OCI-LY7 (cell line): ENCODE measurements at regions of chr20 and their contacts with region 1.

Region 1: DNA sequence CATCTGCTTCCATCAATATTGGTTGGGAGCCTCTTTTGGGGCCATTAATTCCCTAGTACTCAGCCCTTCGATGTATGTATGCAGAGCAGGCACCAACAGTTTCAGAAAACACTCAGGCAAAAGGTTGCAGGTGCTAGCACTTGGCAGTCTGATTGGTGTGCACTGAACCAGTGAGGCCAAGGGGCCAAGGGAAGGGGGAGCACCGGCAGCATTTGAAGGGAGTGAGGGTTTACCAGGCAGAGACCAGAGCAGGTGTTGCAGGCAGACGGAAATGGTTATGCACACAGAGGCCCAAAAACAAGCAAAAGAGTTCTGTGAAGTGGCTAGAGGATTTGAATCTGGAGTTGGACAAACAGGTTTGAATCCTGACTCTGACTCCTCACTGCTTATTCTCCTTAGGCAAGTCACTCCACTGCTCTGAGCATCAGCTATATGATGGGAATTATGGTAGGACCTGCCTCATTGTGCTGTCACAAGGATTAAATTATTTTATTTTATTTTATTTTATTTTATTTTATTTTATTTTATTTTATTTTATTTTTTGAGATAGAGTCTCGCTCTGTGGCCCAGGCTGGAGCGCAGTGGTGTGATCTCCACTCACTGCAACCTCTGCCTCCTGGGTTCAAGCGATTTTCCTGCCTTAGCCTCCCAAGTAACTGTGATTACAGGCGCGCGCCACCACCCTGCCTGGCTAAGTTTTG is 58.1 kb upstream of the SHLD1 start:
- DNase-seq: peak; percentile 99
- H3K4me3 ChIP-seq: peak overlapping the region; percentile 48
- H3K27ac ChIP-seq: peak overlapping the region; percentile 93
- H3K4me1 ChIP-seq: peaks cover 75% of the 10 kb centered on the region
- CTCF ChIP-seq: no peak

Region 2: DNA sequence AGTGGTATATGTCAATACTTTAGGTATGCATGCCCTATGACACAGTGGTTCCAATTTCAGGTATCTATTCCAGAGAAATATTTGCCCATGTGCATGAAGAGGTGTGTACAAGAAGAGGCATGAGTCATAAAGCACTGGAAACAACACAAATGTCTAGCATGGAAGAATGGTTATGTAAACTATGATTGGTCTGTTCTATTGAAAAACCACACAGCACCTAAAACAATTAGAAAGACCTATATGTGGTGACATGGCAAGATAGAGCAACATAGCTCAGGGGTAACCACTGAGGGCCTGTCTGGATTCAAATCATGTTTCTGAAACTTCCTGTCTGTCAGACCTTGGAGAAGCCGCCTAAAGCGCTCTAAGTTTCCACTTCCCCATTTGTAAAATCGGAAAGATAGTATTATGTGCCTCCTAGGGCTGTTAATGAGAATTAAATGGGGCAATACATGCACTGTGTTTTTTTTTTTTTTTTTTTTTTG is 17.9 kb before region 1 on chr20:
- CTCF ChIA-PET with region 1: no interaction called
- POLR2A ChIA-PET with region 1: interaction called, 36 read pairs
- intact Hi-C with region 1: loop called (anchors 1 kb)
- DNase-seq: peak; percentile 94
- H3K4me3 ChIP-seq: peak overlapping the region; percentile 61
- H3K27ac ChIP-seq: peak overlapping the region; percentile 94
- H3K4me1 ChIP-seq: peaks cover 99% of the 10 kb centered on the region
- CTCF ChIP-seq: 0 out of 2 replicates have a peak, but pooled peaks have one; percentile 30

Region 3: DNA sequence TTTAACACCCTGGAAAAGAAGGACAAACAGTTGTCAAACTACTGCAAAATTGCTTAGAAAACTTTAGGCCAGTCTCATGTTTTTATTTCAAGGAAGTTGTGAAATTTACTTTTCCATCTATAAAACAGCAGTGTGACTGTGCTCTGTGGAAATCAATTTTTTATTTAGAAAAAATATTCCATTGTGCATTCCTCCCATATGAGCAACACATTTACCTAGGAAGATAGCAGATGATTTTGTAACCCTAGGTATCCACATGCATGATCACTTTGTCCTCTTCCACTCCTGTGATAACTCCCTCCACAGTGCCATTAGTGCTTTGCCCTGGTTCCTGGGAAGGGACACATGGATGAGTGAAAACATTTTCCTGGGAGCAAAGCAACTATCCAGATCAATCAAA is 11.9 kb before region 1 on chr20:
- CTCF ChIA-PET with region 1: no interaction called
- POLR2A ChIA-PET with region 1: interaction called, 36 read pairs
- intact Hi-C with region 1: no loop called
- DNase-seq: no peak
- H3K4me3 ChIP-seq: no peak overlapping the region
- H3K27ac ChIP-seq: no peak overlapping the region
- H3K4me1 ChIP-seq: peaks cover 63% of the 10 kb centered on the region
- CTCF ChIP-seq: no peak

Region 4: DNA sequence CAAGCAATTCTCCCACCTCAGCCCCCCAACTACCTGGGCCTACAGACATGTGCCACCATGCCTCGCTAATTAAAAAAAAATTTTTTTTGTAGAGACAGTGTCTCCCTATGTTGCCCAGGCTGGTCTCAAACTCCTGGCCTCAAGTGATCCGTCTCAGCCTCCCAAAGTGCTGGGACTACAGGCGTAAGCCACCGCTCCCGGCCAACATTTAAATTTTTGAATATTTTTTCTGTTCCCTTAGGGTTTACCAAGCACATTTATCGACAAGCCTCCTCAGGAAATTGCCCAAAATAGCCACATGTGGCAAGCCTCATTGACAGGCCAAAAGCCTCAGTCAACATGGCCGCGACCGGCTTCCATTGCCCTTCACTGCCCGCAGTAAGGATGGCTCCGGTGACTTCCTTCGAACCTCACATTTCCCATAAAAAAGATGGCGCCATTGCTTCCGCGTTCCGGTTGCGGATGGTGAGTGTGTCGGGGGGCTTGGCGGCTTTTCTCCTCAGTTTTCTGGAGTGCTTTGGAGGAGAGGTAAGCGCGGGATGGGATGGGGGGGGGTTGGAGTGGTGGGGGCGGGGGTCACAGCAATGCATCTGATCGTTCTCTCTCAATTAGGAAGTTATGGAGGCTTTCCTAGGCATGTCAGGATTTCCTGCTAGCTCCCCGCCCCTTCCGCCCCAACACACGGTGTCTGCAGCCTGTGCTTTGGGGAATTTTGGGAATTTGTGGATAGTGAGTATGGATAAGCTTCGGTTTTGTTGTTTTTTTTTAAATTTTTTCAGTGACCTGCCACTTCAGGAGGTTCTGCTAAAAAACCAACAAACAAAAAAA is 58.1 kb after region 1 on chr20 and contains the start of gene SHLD1:
- CTCF ChIA-PET with region 1: no interaction called
- POLR2A ChIA-PET with region 1: interaction called, 10 read pairs
- intact Hi-C with region 1: no loop called
- DNase-seq: peak; percentile 94
- H3K4me3 ChIP-seq: peak within 1 kb of the TSS; percentile 83
- H3K27ac ChIP-seq: peak within 1 kb of the TSS; percentile 43
- H3K4me1 ChIP-seq: peaks cover 47% of the 10 kb centered on the region
- CTCF ChIP-seq: no peak
- total RNA-seq, gene SHLD1: 19.4 and 29.6 TPM in 2 replicates

Region 5: GRCh38 chr20:5770987-5771318 is 78.9 kb after region 1 on chr20:
- CTCF ChIA-PET with region 1: no interaction called
- POLR2A ChIA-PET with region 1: no interaction called
- intact Hi-C with region 1: loop called (anchors 2 kb)
- DNase-seq: peak; percentile 50
- H3K4me3 ChIP-seq: peak overlapping the region; percentile 33
- H3K27ac ChIP-seq: peak overlapping the region; percentile 80
- H3K4me1 ChIP-seq: peaks cover 63% of the 10 kb centered on the region
- CTCF ChIP-seq: no peak